H1 (cell line): ENCODE measurements at regions of chr12 and their contacts with region 1.

Region 1: GRCh38 chr12:107402041-107403022 is 283.3 kb upstream of the PWP1 start:
- DNase-seq: peak; percentile 79 to 81
- H3K4me3 ChIP-seq: no peak overlapping the region; a peak in 1 of 8 replicates
- H3K27ac ChIP-seq: no peak overlapping the region
- H3K4me1 ChIP-seq: peaks cover 1 to 13% (median 8%) of the 10 kb centered on the region in 4 experiments; a peak in 4 of 7 replicates
- H3K27me3 ChIP-seq: no peaks in the 10 kb centered on the region; a peak in 1 of 7 replicates
- CTCF ChIP-seq: peak; percentile 73 to 89 (median 87)
- EP300 ChIP-seq: no peak
- POLR2A ChIP-seq: no peak
- RAD21 ChIP-seq: peak; percentile 80 to 89

Region 2: GRCh38 chr12:107126796-107127481 is 275.4 kb before region 1 on chr12:
- CTCF ChIA-PET with region 1: interaction called, 193 read pairs
- POLR2A ChIA-PET with region 1: interaction called, 5 read pairs
- DNase-seq: no peak
- H3K4me3 ChIP-seq: no peak overlapping the region
- H3K27ac ChIP-seq: no peak overlapping the region
- H3K4me1 ChIP-seq: peaks cover 0 to 8% (median 1%) of the 10 kb centered on the region in 4 experiments; a peak in 4 of 7 replicates
- H3K27me3 ChIP-seq: no peaks in the 10 kb centered on the region
- CTCF ChIP-seq: peak in 2 of 3 experiments; percentile 41 to 48; a peak in 3 of 4 replicates
- EP300 ChIP-seq: no peak
- POLR2A ChIP-seq: no peak
- RAD21 ChIP-seq: peak; percentile 57 to 71

Region 3: DNA sequence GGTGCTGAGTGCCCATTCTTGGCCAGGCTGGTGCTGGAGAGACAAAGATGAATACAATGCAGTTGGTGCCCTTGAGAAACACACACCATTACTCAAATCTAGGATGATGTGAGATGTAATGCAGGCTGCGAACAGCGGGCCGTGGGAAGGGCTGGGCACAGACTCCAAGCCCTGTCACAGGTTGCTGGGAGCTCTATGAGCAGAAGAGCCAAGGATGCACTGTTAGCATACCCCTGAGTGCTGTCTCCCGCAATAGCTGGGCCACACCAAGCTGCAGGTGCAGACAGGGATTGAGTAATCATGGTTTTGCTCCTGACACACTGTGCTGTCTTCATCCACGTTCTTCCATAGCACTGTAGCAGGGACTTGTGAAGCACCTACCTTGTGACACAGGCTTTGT is 61.4 kb before region 1 on chr12:
- CTCF ChIA-PET with region 1: interaction called, 10 read pairs
- POLR2A ChIA-PET with region 1: no interaction called
- DNase-seq: no peak
- H3K4me3 ChIP-seq: no peak overlapping the region
- H3K27ac ChIP-seq: no peak overlapping the region
- H3K4me1 ChIP-seq: no peaks in the 10 kb centered on the region
- H3K27me3 ChIP-seq: no peaks in the 10 kb centered on the region
- CTCF ChIP-seq: no peak
- EP300 ChIP-seq: no peak
- POLR2A ChIP-seq: no peak
- RAD21 ChIP-seq: no peak

Region 4: GRCh38 chr12:107436376-107436775 is 34.0 kb after region 1 on chr12:
- CTCF ChIA-PET with region 1: interaction called, 24 read pairs
- POLR2A ChIA-PET with region 1: no interaction called
- DNase-seq: no peak
- H3K4me3 ChIP-seq: no peak overlapping the region
- H3K27ac ChIP-seq: no peak overlapping the region
- H3K4me1 ChIP-seq: peaks cover 3 to 5% (median 3%) of the 10 kb centered on the region in 4 experiments; a peak in 6 of 7 replicates
- H3K27me3 ChIP-seq: no peaks in the 10 kb centered on the region
- CTCF ChIP-seq: no peak
- EP300 ChIP-seq: no peak
- POLR2A ChIP-seq: no peak
- RAD21 ChIP-seq: no peak

Region 5: GRCh38 chr12:107468182-107468581 is 65.8 kb after region 1 on chr12:
- CTCF ChIA-PET with region 1: interaction called, 10 read pairs
- POLR2A ChIA-PET with region 1: interaction called, 3 read pairs
- DNase-seq: no peak
- H3K4me3 ChIP-seq: no peak overlapping the region
- H3K27ac ChIP-seq: no peak overlapping the region
- H3K4me1 ChIP-seq: peaks cover 0 to 10% (median 4%) of the 10 kb centered on the region in 4 experiments; a peak in 3 of 7 replicates
- H3K27me3 ChIP-seq: no peaks in the 10 kb centered on the region; a peak in 5 of 7 replicates
- CTCF ChIP-seq: no peak
- EP300 ChIP-seq: no peak
- POLR2A ChIP-seq: no peak
- RAD21 ChIP-seq: no peak

Region 6: DNA sequence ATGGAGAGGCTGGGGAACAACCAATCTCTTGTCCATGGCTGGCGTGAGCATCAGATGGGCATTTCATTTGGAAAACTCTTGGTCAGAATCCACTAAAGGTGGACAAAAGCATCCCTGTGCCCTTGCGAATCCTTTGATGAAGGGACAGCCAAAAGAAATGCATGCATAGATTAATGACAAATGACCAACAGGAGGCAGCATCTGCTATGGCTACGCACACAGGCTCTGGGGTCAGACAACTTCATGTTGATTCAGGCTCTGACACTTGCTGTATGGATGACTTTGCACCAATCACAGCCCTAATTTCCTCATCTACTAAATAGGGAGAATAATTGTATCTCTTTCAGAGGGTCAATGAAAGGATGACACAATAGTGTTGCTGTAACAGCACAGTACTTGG is 489.6 kb after region 1 on chr12:
- CTCF ChIA-PET with region 1: no interaction called
- POLR2A ChIA-PET with region 1: no interaction called
- DNase-seq: no peak
- H3K4me3 ChIP-seq: no peak overlapping the region
- H3K27ac ChIP-seq: no peak overlapping the region
- H3K4me1 ChIP-seq: no peaks in the 10 kb centered on the region
- H3K27me3 ChIP-seq: no peaks in the 10 kb centered on the region
- CTCF ChIP-seq: peak; percentile 32 to 80 (median 51)
- EP300 ChIP-seq: no peak
- POLR2A ChIP-seq: no peak
- RAD21 ChIP-seq: peak; percentile 56 to 60